ENCODE measurements at regions of chr9 and their contacts with region 1.

Region 1: GRCh38 chr9:131727184-131727759 is 12.6 kb downstream of the RAPGEF1 start:
- DNase-seq: peak; percentile 81
- H3K4me3 Mint-ChIP-seq: peak overlapping the region; percentile 24
- H3K27ac Mint-ChIP-seq: peak overlapping the region; percentile 19
- H3K4me1 Mint-ChIP-seq: peaks cover 33% of the 10 kb centered on the region
- H3K27me3 Mint-ChIP-seq: no peaks in the 10 kb centered on the region
- CTCF ChIP-seq: no peak

Region 2: GRCh38 chr9:131704141-131704983 is 22.9 kb before region 1 on chr9:
- CTCF ChIA-PET with region 1: interaction called, 4 read pairs
- POLR2A ChIA-PET with region 1: interaction called, 32 read pairs
- intact Hi-C with region 1: no loop called
- DNase-seq: peak; percentile 59
- H3K4me3 Mint-ChIP-seq: no peak overlapping the region
- H3K27ac Mint-ChIP-seq: no peak overlapping the region
- H3K4me1 Mint-ChIP-seq: peaks cover 41% of the 10 kb centered on the region
- H3K27me3 Mint-ChIP-seq: no peaks in the 10 kb centered on the region
- CTCF ChIP-seq: no peak

Region 3: DNA sequence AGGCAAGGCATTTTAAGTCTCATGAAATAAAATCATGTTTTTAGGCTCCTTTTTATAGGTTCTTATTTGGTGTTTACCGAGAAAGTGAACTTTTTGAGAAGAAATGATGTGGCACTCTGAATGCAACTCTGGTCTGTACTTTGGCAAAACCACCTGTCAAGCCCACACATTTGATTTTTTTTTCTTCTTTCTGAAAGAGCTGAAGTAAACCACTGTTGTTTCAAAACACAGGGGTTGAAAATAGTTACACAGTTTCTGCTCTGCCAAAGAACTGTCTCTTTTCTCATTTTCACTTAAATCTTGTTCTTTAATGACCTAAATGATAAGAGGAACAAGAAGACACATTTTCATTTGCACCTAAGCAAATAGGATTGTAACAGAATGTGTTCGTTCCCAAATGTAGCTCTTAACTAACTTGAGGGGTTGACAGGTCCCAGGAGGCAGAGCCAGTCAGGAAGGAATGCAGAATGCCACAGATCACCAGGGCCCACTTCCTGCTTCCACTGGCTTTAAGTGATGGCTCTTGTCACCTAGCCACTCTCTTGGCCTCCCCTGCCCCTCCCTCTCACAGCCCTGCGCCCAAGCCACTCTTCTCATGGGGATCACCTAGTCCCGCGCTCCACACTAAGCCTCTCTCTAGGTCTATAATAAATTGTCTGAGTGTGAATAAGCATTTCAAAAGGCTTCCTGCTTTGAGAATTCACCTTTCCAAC is 305.1 kb after region 1 on chr9:
- CTCF ChIA-PET with region 1: no interaction called
- POLR2A ChIA-PET with region 1: no interaction called
- intact Hi-C with region 1: no loop called
- DNase-seq: no peak
- H3K4me3 Mint-ChIP-seq: no peak overlapping the region
- H3K27ac Mint-ChIP-seq: no peak overlapping the region
- H3K4me1 Mint-ChIP-seq: peaks cover 15% of the 10 kb centered on the region
- H3K27me3 Mint-ChIP-seq: no peaks in the 10 kb centered on the region
- CTCF ChIP-seq: no peak